Heart right ventricle (tissue), 16 donors: ENCODE measurements at regions of chr10 and their contacts with region 1.

Region 1: GRCh38 chr10:84360637-84361365 is 32.4 kb downstream of the CCSER2 start:
- DNase-seq: no peak
- ATAC-seq: peak in 5 of 8 donors; percentile 28 to 50 (median 35)
- H3K4me3 ChIP-seq: peak overlapping the region in 8 of 10 donors; percentile 9 to 39 (median 31)
- H3K27ac ChIP-seq: peak overlapping the region in 5 of 10 donors; percentile 5 to 52 (median 44)
- H3K4me1 ChIP-seq: peaks cover 0 to 64% (median 43%) of the 10 kb centered on the region in 9 donors
- H3K27me3 ChIP-seq: no peaks in the 10 kb centered on the region
- CTCF ChIP-seq: no peak

Region 2: DNA sequence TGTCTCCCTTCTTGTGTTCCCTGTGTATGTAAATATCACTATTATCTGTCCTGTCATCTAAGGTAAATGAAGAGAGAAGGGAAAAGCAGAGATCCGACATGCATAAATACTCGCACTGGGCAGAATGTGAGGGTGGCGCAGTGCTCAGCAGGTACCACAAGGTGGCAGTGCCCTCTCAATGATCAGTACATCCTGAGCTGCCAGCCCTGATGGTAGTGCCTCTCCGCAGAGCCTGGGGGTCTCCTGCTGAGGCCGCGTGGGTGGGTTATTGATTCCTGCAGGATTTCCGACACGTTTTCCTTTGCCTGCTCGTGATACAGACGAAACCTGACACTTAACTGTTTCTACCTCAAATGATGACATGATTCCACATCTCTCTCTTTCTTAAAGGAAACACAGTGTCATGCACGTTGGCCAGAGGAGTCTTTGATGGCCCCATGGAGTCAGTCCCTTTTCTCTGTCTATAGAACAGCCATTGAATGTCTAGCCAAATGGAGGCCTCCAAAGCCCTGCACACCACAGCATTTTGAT is 96.1 kb before region 1 on chr10:
- intact Hi-C with region 1: loop called in 2 of 10 experiments (anchors 5 kb)
- DNase-seq: peak; percentile 56 to 58
- ATAC-seq: peak; percentile 87 to 94 (median 91)
- H3K4me3 ChIP-seq: no peak overlapping the region
- H3K27ac ChIP-seq: no peak overlapping the region
- H3K4me1 ChIP-seq: peaks cover 0 to 5% (median 0%) of the 10 kb centered on the region in 9 donors
- H3K27me3 ChIP-seq: peaks cover 0 to 25% (median 7%) of the 10 kb centered on the region in 7 donors
- CTCF ChIP-seq: peak; percentile 85 to 95 (median 93)

Region 3: GRCh38 chr10:84862551-84862950 is 501.8 kb after region 1 on chr10:
- intact Hi-C with region 1: no loop called
- DNase-seq: no peak
- ATAC-seq: no peak
- H3K4me3 ChIP-seq: no peak overlapping the region
- H3K27ac ChIP-seq: no peak overlapping the region
- H3K4me1 ChIP-seq: peaks cover 0 to 5% (median 0%) of the 10 kb centered on the region in 9 donors
- H3K27me3 ChIP-seq: no peaks in the 10 kb centered on the region
- CTCF ChIP-seq: no peak